RWPE1 (cell line): ENCODE measurements at regions of chr11 and their contacts with region 1.

Region 1: GRCh38 chr11:75204685-75205563 is 35.6 kb upstream of the TPBGL start:
- DNase-seq: peak; percentile 76
- H3K27ac ChIP-seq: no peak overlapping the region
- CTCF ChIP-seq: peak; percentile 81

Region 2: GRCh38 chr11:74929431-74930363 is 275.2 kb before region 1 on chr11:
- CTCF ChIA-PET with region 1: interaction called, 17 read pairs
- POLR2A ChIA-PET with region 1: no interaction called
- DNase-seq: peak; percentile 47
- H3K27ac ChIP-seq: no peak overlapping the region
- CTCF ChIP-seq: peak; percentile 88

Region 3: GRCh38 chr11:75022759-75023396 is 182.0 kb before region 1 on chr11:
- CTCF ChIA-PET with region 1: interaction called, 36 read pairs
- POLR2A ChIA-PET with region 1: no interaction called
- DNase-seq: peak; percentile 76
- H3K27ac ChIP-seq: no peak overlapping the region
- CTCF ChIP-seq: peak; percentile 93

Region 4: GRCh38 chr11:75241036-75241905 is 36.3 kb after region 1 on chr11:
- CTCF ChIA-PET with region 1: interaction called, 14 read pairs
- POLR2A ChIA-PET with region 1: no interaction called
- DNase-seq: peak; percentile 86
- H3K27ac ChIP-seq: no peak overlapping the region
- CTCF ChIP-seq: peak; percentile 97